ENCODE measurements at regions of chr20 and their contacts with region 1.

Region 1: DNA sequence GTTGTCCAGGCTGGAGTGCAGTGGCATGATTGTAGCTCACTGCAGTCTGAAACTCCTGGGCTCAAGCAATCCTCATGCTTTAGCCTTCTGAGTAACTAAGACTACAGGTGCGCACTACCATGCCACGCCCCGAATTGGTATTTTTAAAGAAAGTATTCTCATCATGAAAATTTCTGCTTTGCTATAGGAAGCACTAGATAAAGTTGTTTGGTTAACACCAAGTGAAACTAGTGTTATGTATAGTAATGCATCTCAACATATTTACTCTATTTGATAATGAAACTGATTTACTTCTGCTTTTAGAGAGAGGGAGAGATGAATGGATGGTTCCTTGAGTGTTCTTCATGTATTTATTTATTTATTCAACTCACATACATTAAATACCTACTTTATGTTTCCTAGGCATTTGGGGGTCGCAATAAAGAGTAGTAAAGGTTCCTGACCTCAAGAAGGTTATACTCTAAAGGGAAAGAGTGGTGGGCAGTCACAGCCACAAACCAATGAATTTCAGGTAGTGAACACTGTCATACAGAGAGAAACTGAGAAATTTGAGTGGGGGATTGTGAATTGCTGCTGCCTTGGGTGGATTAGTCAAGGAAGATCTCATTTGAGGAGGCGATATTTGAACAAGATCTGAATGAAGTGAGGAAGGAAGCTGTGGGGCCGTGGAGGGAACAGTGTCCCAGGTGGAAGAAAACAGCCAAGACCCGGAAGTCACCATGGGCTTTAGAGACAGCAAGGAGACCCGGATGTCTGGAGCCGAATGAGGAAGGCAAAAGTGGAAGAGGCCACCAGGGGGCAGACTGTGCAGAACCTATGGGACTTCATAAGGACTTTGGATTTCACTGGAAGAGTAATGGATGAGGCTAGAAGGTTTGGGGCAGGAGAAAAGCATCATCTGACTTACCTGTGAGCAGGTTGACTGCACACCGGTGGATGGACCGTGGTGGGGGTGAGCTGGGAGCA is 185.6 kb downstream of the TSHZ2 start:
- DNase-seq: peak in 4 of 5 donors; percentile 4 to 37 (median 16)
- H3K4me3 ChIP-seq: no peak overlapping the region
- H3K4me3 Mint-ChIP-seq: peak overlapping the region in 2 of 8 donors; percentile 17 to 28
- H3K27ac ChIP-seq: no peak overlapping the region
- H3K27ac Mint-ChIP-seq: no peak overlapping the region
- H3K4me1 ChIP-seq: no peaks in the 10 kb centered on the region
- H3K4me1 Mint-ChIP-seq: peaks cover 6 to 25% (median 9%) of the 10 kb centered on the region in 4 donors
- H3K27me3 ChIP-seq: no peaks in the 10 kb centered on the region
- H3K27me3 Mint-ChIP-seq: peaks cover 0 to 3% of the 10 kb centered on the region in 2 donors

Region 2: DNA sequence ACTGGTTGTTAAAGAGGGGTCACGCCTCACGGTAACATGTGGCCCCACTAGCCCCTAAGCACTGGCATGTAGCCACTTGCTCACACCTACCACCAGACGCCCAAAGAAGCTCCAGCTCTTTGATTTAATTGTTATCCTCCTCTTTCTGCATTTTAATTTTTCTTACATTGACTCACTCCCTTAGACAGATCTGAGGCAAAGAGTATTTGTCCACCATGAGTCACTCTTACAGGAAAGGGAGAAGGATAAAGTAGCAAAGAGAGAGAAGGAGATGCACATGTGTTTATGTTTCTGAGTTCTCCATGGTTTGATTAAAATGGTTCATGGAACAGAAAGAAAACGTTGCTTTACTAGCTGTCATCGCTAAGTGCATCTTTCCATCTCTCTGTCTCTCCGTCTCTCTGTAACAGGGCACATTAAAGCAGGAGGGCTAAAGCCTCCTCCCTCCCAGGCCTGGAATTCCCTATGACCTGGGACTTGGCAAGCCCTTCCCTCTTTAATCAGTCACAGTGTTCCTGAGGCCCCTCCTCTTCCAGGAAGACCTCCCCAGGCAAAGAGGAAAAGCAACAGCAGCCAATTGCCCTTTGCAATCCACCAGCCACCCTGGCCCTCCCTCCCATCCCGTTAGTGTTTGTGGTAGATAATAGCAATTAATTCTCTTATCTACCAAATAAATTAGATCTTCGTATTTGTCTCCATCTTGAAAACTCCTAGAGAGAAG is 298.4 kb before region 1 on chr20:
- CTCF ChIA-PET with region 1: no interaction called
- POLR2A ChIA-PET with region 1: no interaction called
- intact Hi-C with region 1: no loop called
- DNase-seq: no peak
- H3K4me3 ChIP-seq: no peak overlapping the region
- H3K4me3 Mint-ChIP-seq: no peak overlapping the region
- H3K27ac ChIP-seq: no peak overlapping the region
- H3K27ac Mint-ChIP-seq: no peak overlapping the region
- H3K4me1 ChIP-seq: no peaks in the 10 kb centered on the region
- H3K4me1 Mint-ChIP-seq: no peaks in the 10 kb centered on the region
- H3K27me3 ChIP-seq: no peaks in the 10 kb centered on the region
- H3K27me3 Mint-ChIP-seq: peaks cover 3 to 10% of the 10 kb centered on the region in 2 donors

Region 3: GRCh38 chr20:53262294-53262859 is 104.7 kb after region 1 on chr20:
- CTCF ChIA-PET with region 1: no interaction called
- POLR2A ChIA-PET with region 1: no interaction called
- intact Hi-C with region 1: no loop called
- DNase-seq: no peak
- H3K4me3 ChIP-seq: no peak overlapping the region
- H3K4me3 Mint-ChIP-seq: no peak overlapping the region
- H3K27ac ChIP-seq: no peak overlapping the region
- H3K27ac Mint-ChIP-seq: no peak overlapping the region
- H3K4me1 ChIP-seq: no peaks in the 10 kb centered on the region
- H3K4me1 Mint-ChIP-seq: no peaks in the 10 kb centered on the region
- H3K27me3 ChIP-seq: no peaks in the 10 kb centered on the region
- H3K27me3 Mint-ChIP-seq: peaks cover 3 to 9% of the 10 kb centered on the region in 2 donors

Region 4: DNA sequence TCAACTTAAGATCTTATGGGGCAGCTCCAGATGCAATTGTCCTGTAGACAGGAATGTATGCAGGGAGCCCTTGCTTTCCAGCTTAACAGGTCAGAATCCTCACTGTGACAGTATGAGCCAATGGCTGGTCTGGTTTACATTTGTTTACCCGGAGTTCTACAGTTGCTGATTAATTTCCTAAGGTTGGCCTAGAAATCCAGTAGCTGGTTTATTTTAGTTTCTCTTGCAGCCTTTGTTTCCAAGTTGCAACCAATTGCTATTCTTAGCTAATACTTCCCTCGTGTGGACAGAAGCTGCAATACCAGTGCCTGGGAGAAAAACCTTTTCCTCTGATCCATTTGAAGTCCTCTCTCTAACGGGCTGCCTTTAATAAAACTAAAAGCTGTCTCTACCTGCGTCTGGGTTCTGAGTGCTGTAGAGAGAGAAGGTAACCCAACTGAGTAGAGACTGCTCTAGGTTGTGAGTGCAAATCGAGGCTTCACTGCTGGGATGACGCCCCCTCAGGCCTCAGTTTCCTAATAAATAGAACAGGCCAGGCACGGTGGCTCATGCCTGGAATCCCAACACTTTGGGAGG is 390.0 kb after region 1 on chr20:
- CTCF ChIA-PET with region 1: interaction called, 4 read pairs
- POLR2A ChIA-PET with region 1: no interaction called
- intact Hi-C with region 1: loop called (anchors 5 kb)
- DNase-seq: peak in 4 of 5 donors; percentile 29 to 37 (median 34)
- H3K4me3 ChIP-seq: no peak overlapping the region
- H3K4me3 Mint-ChIP-seq: no peak overlapping the region
- H3K27ac ChIP-seq: no peak overlapping the region
- H3K27ac Mint-ChIP-seq: no peak overlapping the region
- H3K4me1 ChIP-seq: no peaks in the 10 kb centered on the region
- H3K4me1 Mint-ChIP-seq: peaks cover 0 to 4% (median 0%) of the 10 kb centered on the region in 4 donors
- H3K27me3 ChIP-seq: no peaks in the 10 kb centered on the region
- H3K27me3 Mint-ChIP-seq: no peaks in the 10 kb centered on the region